ENCODE measurements at regions of chr4 and their contacts with region 1.

Region 1: GRCh38 chr4:77385124-77385969 is 220.3 kb upstream of the CXCL13 start:
- DNase-seq: peak; percentile 54 to 70 (median 57)
- ATAC-seq: peak; percentile 75 to 78
- H3K4me3 ChIP-seq: no peak overlapping the region
- H3K27ac ChIP-seq: no peak overlapping the region
- H3K4me1 ChIP-seq: no peaks in the 10 kb centered on the region
- H3K27me3 ChIP-seq: no peaks in the 10 kb centered on the region

Region 2: GRCh38 chr4:77433418-77433733 is 48.0 kb after region 1 on chr4:
- intact Hi-C with region 1: loop called in 3 of 4 experiments (anchors 5 to 10 kb)
- DNase-seq: no peak
- ATAC-seq: peak; percentile 83 to 85
- H3K4me3 ChIP-seq: no peak overlapping the region
- H3K27ac ChIP-seq: no peak overlapping the region
- H3K4me1 ChIP-seq: no peaks in the 10 kb centered on the region
- H3K27me3 ChIP-seq: no peaks in the 10 kb centered on the region

Region 3: GRCh38 chr4:77564231-77564630 is 178.9 kb after region 1 on chr4:
- intact Hi-C with region 1: no loop called
- DNase-seq: no peak
- ATAC-seq: peak; percentile 41 to 83
- H3K4me3 ChIP-seq: no peak overlapping the region
- H3K27ac ChIP-seq: no peak overlapping the region
- H3K4me1 ChIP-seq: no peaks in the 10 kb centered on the region
- H3K27me3 ChIP-seq: no peaks in the 10 kb centered on the region

Region 4: DNA sequence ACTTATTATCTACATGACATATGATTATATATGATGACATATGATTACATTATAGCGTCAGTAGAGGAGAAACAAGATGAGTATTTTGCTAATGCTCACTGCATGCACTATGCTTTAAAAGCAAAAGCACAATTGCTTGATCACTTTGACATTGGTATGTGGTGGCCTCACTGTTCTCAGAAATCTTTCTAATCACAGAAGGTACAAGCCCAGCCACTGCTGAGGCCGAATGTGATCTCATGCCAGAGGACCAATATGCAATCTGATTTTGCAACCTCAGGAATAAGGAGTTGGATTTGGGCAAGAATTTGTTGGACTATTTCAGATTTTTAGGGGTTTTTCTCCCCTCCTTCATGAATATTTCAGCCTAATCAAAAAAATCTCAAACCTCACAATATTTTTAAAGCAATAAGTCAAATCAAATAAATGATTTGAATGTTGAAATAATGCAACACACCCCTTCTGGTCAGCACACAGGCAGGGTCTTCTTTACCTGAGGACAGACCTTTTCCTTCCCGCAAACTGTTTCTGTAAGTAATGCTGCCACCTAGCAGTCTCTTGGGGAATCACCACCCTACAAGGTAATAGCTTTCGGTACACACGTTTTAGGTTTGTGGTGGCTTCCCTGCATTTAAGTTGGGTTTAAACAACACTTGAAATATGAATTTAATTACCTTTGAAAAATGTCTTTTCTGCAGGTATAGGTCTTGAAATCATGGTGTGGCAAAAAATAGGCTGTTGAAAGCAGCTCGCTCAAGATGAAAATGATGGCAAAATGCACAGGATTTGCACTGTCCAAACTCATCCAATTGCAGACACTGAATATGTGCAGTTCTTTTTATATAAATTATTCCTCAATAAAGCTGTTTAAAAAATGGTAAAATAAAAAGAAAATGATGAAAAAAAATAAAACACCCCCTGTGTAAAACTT is 215.4 kb after region 1 on chr4:
- intact Hi-C with region 1: loop called in 3 of 4 experiments (anchors 5 kb)
- DNase-seq: no peak
- ATAC-seq: no peak
- H3K4me3 ChIP-seq: no peak overlapping the region
- H3K27ac ChIP-seq: no peak overlapping the region
- H3K4me1 ChIP-seq: no peaks in the 10 kb centered on the region
- H3K27me3 ChIP-seq: no peaks in the 10 kb centered on the region

Region 5: DNA sequence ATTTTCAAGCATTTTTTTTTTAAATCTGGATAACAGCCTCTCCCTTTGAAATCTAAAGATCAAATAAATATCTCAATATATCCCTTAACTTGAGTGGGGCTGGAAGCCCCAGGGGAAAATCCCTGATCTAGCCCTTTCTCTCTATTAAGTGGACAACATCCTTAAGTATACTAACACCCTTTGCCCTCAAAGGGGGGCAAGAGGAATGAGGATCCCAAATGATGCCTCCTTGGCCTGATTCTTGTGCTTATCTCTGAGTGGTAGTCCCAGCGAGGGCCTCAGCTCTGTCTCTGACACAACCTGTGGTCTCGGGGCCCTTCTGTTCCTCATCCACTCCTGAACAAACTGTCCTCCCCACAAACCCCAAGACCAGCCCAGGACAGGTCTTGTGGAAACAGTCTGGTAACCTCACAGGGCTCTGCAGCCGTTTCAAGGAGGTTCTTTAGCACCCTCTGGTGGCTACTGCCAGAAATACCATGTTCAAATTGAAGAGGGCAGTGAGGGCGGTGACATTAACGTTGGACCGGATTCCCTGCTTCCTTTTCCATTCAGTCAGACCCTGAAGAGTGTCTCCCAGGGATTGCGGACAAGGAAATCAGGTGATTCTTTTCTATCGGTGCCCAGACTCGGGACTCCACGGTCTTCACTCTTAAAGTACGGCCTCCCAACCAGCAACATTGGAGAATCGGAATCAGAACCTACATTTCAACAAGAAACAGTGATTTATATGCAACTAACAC is 233.2 kb after region 1 on chr4:
- intact Hi-C with region 1: loop called in 2 of 4 experiments (anchors 5 to 10 kb)
- DNase-seq: peak in 2 of 3 donors; percentile 40 to 59
- ATAC-seq: peak; percentile 91 to 95
- H3K4me3 ChIP-seq: no peak overlapping the region
- H3K27ac ChIP-seq: no peak overlapping the region
- H3K4me1 ChIP-seq: no peaks in the 10 kb centered on the region
- H3K27me3 ChIP-seq: no peaks in the 10 kb centered on the region

Measured in right cardiac atrium (tissue), 5 donors.